Heart left ventricle (tissue), 16 donors: ENCODE measurements at regions of chr1 and their contacts with region 1.

Region 1: DNA sequence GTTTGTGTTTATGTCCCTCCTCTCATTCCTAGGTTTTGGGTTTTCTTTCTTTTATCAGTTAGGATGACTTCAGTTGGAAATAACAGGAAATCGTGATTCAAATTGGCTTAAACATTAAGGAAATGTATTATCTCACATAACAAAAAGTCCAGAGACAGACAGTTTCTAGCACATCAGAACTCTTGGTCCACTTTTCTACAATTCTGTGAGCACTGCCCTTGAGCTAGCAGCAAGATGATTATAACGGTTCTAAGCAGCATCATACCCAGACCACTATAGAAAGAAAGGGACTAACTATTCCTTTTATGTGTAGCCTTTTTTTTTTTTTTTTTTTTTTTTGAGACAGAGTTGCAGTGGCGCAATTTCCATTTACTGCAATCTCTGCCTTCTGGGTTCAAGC is 18.9 kb downstream of the FCGR2B start:
- DNase-seq: no peak
- ATAC-seq: no peak
- H3K4me3 ChIP-seq: no peak overlapping the region
- H3K27ac ChIP-seq: no peak overlapping the region
- H3K4me1 ChIP-seq: no peaks in the 10 kb centered on the region
- H3K27me3 ChIP-seq: peaks cover 0 to 16% (median 0%) of the 10 kb centered on the region in 9 donors
- CTCF ChIP-seq: no peak
- POLR2A ChIP-seq: no peak

Region 2: GRCh38 chr1:161733526-161733925 is 51.6 kb after region 1 on chr1:
- intact Hi-C with region 1: loop called in 1 of 10 experiments (anchors 5 kb)
- DNase-seq: no peak
- ATAC-seq: peak in 2 of 4 donors; percentile 32 to 34
- H3K4me3 ChIP-seq: no peak overlapping the region
- H3K27ac ChIP-seq: peak overlapping the region in 6 of 12 donors; percentile 9 to 39 (median 21)
- H3K4me1 ChIP-seq: peaks cover 0 to 39% (median 0%) of the 10 kb centered on the region in 12 donors
- H3K27me3 ChIP-seq: peaks cover 0 to 9% (median 0%) of the 10 kb centered on the region in 9 donors
- CTCF ChIP-seq: no peak
- POLR2A ChIP-seq: no peak